Ascending aorta (tissue), 2 donors: ENCODE measurements at regions of chr4 and their contacts with region 1.

Region 1: GRCh38 chr4:74531963-74532794 is 87.2 kb downstream of the AREG start:
- DNase-seq: no peak
- H3K4me3 ChIP-seq: no peak overlapping the region
- H3K27ac ChIP-seq: no peak overlapping the region
- H3K4me1 ChIP-seq: no peaks in the 10 kb centered on the region
- H3K27me3 ChIP-seq: no peaks in the 10 kb centered on the region
- CTCF ChIP-seq: peak; percentile 19 to 57 (median 55)

Region 2: DNA sequence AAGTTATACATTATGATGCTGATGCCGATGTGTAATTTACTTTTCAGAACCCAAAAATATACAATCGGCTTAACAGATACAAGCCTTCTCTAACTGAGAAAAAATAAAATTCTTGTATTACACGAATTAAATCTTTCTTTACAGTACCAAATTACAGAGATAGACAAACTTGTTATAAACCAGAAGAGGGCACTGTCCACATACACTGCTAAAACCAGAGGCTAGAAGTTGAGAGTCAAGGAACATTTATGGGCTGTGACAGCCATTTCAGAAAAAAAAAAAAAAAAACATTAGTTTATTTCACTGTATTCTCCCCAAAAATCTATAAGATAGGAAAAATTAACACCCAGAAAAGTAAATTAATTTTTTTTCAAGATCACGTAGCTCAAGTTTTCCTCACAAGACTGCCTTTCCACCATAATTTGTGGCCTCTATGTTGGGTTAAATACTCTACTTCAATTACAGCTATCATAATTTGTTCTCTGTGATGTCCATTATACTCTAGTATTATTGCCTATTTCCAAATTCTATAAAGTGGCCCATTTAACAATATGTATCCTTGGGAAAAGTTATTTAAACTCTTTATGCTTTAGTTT is 155.2 kb before region 1 on chr4:
- intact Hi-C with region 1: loop called (anchors 2 kb)
- DNase-seq: no peak
- H3K4me3 ChIP-seq: no peak overlapping the region
- H3K27ac ChIP-seq: no peak overlapping the region
- H3K4me1 ChIP-seq: no peaks in the 10 kb centered on the region
- H3K27me3 ChIP-seq: no peaks in the 10 kb centered on the region
- CTCF ChIP-seq: peak; percentile 42 to 71 (median 45)